ENCODE measurements at regions of chr3 and their contacts with region 1.

Region 1: GRCh38 chr3:98602078-98602678 is 8.8 kb upstream of the CPOX start:
- DNase-seq: peak; percentile 39

Region 2: GRCh38 chr3:98778852-98779413 is 176.8 kb after region 1 on chr3:
- in situ Hi-C with region 1: loop called (anchors 25 kb)
- DNase-seq: peak; percentile 64